ENCODE measurements at regions of chr7 and their contacts with region 1.

Region 1: GRCh38 chr7:114085592-114086501 is 167.0 kb upstream of the PPP1R3A start:
- DNase-seq: peak; percentile 87 to 93 (median 90)
- ATAC-seq: peak; percentile 61 to 81 (median 69)
- H3K4me3 ChIP-seq: peak overlapping the region; percentile 61 to 66 (median 66)
- H3K27ac ChIP-seq: peak overlapping the region; percentile 82 to 97 (median 97)
- H3K4me1 ChIP-seq: peaks cover 0 to 7% (median under 1%) of the 10 kb centered on the region in 4 donors
- H3K27me3 ChIP-seq: no peaks in the 10 kb centered on the region
- CTCF ChIP-seq: no peak
- POLR2A ChIP-seq: peak; percentile 34

Region 2: DNA sequence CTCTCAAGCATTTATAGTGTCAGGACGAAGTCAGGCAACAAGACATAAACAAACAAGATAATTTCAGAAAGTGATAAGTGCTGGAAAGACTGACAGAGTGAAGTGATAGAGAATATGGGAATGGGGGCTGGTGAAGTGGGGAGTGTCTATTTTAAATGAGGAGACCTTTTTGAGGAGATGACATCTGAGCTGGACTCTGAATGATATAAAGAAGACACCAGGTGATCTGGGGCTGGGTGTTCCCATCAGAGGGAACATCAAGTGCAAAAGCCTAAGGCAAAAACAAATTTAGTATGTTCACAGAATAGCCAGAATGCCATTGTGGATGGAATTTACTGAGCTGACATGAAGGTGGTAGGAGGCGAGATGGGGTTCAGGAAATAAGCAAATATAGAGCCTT is 250.5 kb before region 1 on chr7:
- intact Hi-C with region 1: no loop called
- DNase-seq: no peak
- ATAC-seq: no peak
- H3K4me3 ChIP-seq: no peak overlapping the region
- H3K27ac ChIP-seq: no peak overlapping the region
- H3K4me1 ChIP-seq: no peaks in the 10 kb centered on the region
- H3K27me3 ChIP-seq: no peaks in the 10 kb centered on the region
- CTCF ChIP-seq: no peak
- POLR2A ChIP-seq: no peak

Region 3: GRCh38 chr7:114414156-114415063 is 328.6 kb after region 1 on chr7 and contains the start of gene FOXP2:
- intact Hi-C with region 1: loop called in 1 of 2 experiments (anchors 10 kb)
- DNase-seq: no peak
- ATAC-seq: peak; percentile 41 to 68 (median 60)
- H3K4me3 ChIP-seq: peak within 1 kb of the TSS; percentile 25 to 52 (median 43)
- H3K27ac ChIP-seq: peak within 1 kb of the TSS; percentile 41 to 80 (median 78)
- H3K4me1 ChIP-seq: peaks cover 0 to 25% (median 3%) of the 10 kb centered on the region in 4 donors
- H3K27me3 ChIP-seq: no peaks in the 10 kb centered on the region
- CTCF ChIP-seq: no peak
- POLR2A ChIP-seq: no peak
- total RNA-seq, gene FOXP2: 2.9 to 8.3 (median 4.4) TPM